Activated CD4-positive, alpha-beta T cell treated with anti-CD3 and anti-CD28 coated beads for 36 hours (primary cell): ENCODE measurements at regions of chr12 and their contacts with region 1.

Region 1: GRCh38 chr12:28998637-28999120 is 150.4 kb upstream of the FAR2 start:
- DNase-seq: peak; percentile 26
- ATAC-seq: peak; percentile 23
- H3K4me3 Mint-ChIP-seq: no peak overlapping the region
- H3K27ac Mint-ChIP-seq: no peak overlapping the region
- H3K4me1 Mint-ChIP-seq: no peaks in the 10 kb centered on the region
- H3K27me3 Mint-ChIP-seq: peaks cover 10% of the 10 kb centered on the region

Region 2: GRCh38 chr12:27733052-27733656 is 1265.5 kb before region 1 on chr12:
- CTCF ChIA-PET with region 1: no interaction called
- POLR2A ChIA-PET with region 1: no interaction called
- intact Hi-C with region 1: loop called in 1 of 2 experiments (anchors 5 kb)
- DNase-seq: peak; percentile 60
- ATAC-seq: peak; percentile 42
- H3K4me3 Mint-ChIP-seq: no peak overlapping the region
- H3K27ac Mint-ChIP-seq: no peak overlapping the region
- H3K4me1 Mint-ChIP-seq: no peaks in the 10 kb centered on the region
- H3K27me3 Mint-ChIP-seq: no peaks in the 10 kb centered on the region

Region 3: DNA sequence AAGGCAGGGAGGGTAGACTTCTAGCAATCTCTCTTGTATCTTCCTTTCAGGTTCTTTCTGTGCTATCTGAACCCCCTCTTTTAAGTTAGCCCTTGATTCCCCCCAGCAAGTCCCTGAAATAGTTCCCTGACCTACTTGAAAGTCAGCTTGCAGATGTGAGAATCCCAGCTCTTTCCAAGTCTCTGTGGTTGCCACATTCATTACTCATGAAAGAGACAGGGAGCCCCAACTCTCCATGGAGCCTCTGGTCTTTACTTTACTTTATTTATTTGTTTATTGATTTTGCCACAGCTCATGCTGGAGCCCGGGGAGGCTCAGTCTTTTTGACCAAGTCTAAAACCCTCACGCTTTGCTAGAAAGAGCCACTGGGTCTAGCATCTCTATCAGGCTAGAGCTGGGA is 43.2 kb before region 1 on chr12:
- CTCF ChIA-PET with region 1: no interaction called
- POLR2A ChIA-PET with region 1: no interaction called
- intact Hi-C with region 1: no loop called
- DNase-seq: no peak
- ATAC-seq: no peak
- H3K4me3 Mint-ChIP-seq: no peak overlapping the region
- H3K27ac Mint-ChIP-seq: no peak overlapping the region
- H3K4me1 Mint-ChIP-seq: no peaks in the 10 kb centered on the region
- H3K27me3 Mint-ChIP-seq: peaks cover 6% of the 10 kb centered on the region